ENCODE measurements at regions of chr2 and their contacts with region 1.

Region 1: DNA sequence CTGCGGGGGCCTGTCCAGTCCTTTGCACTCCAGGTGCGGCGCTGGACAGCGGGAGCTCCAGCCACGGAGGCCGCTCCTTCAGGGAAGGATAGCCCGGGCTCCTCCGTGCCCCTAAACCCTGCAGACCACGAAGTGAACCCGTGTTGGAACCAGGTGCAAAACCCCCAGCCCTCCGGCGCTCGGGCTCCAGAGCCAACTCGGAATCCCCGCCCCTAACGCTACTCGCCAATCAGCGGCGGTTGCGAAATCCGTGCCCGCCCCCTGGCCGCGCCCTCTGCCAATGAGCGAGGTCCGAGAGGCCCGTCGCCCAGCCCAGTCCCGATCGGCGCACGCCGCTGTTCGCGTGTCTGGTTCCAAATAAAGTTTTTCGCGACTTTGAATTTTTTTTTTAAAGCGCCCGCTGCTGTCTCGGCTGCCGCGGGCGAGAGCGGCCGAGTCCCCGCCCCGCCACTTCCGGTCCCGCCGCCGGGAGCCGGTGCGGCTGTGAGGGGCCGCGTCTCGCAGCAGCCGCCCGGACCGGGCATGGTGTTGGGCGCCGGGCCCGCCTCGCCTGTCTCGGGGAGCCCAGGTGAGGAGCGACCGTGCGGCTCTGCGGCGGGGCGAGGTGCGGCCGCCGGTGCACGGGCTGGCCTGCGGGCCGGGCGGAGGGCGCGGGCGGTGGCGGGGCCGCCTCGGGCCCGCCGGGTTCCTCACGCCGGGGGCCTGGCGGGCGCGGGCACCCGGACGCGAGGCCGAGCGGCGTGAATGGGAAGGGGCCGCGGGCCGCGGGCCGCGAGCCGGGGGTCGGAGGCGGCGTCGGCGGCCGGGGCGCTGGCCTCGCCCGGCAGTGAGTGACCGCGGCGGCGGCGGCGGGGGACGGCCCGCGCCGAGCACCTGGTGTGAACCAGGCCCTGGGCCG is at the start of gene UBE2F:
- H3K4me3 Mint-ChIP-seq: peak within 1 kb of the TSS; percentile 90
- H3K27ac Mint-ChIP-seq: peak within 1 kb of the TSS; percentile 94
- H3K4me1 Mint-ChIP-seq: peaks cover 54% of the 10 kb centered on the region
- H3K27me3 Mint-ChIP-seq: no peaks in the 10 kb centered on the region

Region 2: GRCh38 chr2:237184192-237184926 is 782.5 kb before region 1 on chr2:
- intact Hi-C with region 1: no loop called
- H3K4me3 Mint-ChIP-seq: no peak overlapping the region
- H3K27ac Mint-ChIP-seq: no peak overlapping the region
- H3K4me1 Mint-ChIP-seq: peaks cover 4% of the 10 kb centered on the region
- H3K27me3 Mint-ChIP-seq: peaks cover 12% of the 10 kb centered on the region

Region 3: DNA sequence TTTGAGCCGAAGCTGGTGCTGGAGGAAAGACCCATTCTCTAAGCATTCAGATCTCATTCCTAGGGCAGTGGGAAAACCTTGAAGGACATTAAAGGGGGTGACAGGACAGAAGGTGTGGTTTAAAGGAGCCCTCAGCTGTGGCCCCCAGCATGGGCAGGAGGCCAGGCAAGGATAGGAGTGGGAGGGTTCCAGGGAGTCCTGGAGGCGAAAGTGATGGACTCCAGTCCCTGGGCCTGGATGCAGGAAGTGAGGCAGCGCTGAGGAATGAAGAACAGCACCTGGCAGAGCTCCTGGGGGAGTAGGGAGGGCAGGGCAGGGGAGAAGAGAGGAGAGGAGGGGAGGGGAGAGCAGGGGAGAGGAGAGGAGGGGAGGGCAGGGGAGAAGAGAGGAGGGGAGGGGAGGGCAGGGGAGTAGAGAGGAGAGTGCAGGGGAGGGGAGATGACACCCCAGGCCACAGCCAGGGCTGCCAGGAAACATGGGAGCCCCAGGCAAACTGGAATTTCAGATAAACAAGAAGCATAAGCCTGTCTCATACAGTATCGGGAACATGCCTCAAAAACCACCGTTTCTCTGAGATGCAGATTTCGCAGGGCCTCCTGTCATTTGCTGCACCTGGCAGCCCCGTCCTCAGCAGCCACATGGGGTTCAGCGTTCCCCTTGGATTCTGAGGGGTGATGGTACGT is 101.7 kb before region 1 on chr2:
- intact Hi-C with region 1: loop called (anchors 5 kb)
- H3K4me3 Mint-ChIP-seq: peak overlapping the region; percentile 0
- H3K27ac Mint-ChIP-seq: peak overlapping the region; percentile 68
- H3K4me1 Mint-ChIP-seq: peaks cover 70% of the 10 kb centered on the region
- H3K27me3 Mint-ChIP-seq: peaks cover 66% of the 10 kb centered on the region

Region 4: DNA sequence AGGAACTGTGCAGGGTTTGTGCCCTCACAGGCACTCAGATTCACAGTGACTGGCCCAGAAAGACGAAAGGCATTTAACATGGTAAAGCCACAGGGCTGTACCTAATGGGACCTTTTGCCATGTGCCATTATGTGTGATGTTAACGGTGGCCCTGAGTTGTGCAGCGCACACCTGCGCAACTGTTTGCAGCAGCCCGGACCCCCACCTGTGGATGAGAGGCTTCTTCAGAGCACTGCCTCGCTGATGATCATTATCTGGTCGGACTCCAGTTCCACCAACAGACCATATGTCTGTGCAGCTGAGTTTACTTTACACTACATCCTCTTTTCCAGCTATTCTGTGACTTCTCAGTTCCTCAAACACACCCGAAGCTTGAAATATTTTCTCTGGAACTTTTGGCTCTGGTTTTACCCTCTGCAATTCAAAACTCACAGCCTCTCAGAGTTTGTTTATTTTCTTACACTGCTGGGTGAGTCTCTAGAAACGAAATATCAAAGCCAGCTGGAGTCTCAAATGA is 35.6 kb before region 1 on chr2:
- intact Hi-C with region 1: loop called (anchors 5 kb)
- H3K4me3 Mint-ChIP-seq: peak overlapping the region; percentile 44
- H3K27ac Mint-ChIP-seq: peak overlapping the region; percentile 82
- H3K4me1 Mint-ChIP-seq: peaks cover 42% of the 10 kb centered on the region
- H3K27me3 Mint-ChIP-seq: peaks cover 27% of the 10 kb centered on the region

Region 5: DNA sequence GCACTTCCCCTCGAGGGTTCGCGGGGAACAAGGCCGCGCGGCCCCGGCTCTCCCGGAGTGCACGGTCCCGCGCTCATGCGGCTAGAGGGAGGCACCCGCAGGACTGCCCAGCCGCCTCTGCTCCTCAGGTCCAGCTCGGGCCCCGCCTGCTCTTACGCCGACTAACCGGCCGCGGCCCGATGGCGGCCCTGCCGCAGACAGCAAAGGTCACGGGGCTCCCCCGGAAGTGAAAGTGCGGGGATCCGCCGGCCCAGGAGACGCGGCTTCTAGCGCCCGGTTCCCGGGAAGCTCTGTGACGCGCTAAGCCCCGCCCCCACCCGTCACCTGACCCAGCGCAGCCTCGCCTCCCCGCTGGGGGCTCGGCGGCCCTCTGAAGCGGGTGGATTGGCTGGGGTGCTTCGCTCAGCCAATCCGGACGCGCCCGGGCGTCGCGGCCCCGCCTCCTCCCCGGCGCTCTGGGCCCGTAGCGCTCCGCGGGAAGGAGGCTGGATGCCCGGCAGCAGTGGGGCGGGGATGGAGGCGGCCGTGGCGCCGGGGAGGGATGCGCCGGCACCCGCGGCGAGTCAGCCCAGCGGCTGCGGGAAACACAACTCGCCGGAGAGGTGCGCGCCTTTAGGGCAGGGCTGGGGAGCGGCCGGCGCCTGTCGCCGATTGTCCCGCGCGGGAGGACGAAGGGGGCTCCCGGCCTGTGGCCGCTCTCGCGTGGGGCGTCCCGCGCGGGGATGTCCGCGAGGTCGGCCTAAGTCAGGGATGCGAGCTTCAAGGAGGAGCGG is 93.9 kb after region 1 on chr2 and contains the start of gene SCLY:
- intact Hi-C with region 1: loop called (anchors 2 kb)
- H3K4me3 Mint-ChIP-seq: peak within 1 kb of the TSS; percentile 91
- H3K27ac Mint-ChIP-seq: peak within 1 kb of the TSS; percentile 90
- H3K4me1 Mint-ChIP-seq: peaks cover 29% of the 10 kb centered on the region
- H3K27me3 Mint-ChIP-seq: peaks cover 22% of the 10 kb centered on the region